Dorsolateral prefrontal cortex (tissue), 120 donors: ENCODE measurements at regions of chr3 and their contacts with region 1.

Region 1: GRCh38 chr3:70531063-70531657 is 218.7 kb upstream of the MDFIC2 start:
- DNase-seq: no peak
- H3K4me3 ChIP-seq: no peak overlapping the region
- H3K27ac ChIP-seq: no peak overlapping the region
- H3K27me3 ChIP-seq: peaks cover 0 to 3% (median 0%) of the 10 kb centered on the region in 45 donors
- CTCF ChIP-seq: peak; percentile 46 to 80 (median 67)

Region 2: DNA sequence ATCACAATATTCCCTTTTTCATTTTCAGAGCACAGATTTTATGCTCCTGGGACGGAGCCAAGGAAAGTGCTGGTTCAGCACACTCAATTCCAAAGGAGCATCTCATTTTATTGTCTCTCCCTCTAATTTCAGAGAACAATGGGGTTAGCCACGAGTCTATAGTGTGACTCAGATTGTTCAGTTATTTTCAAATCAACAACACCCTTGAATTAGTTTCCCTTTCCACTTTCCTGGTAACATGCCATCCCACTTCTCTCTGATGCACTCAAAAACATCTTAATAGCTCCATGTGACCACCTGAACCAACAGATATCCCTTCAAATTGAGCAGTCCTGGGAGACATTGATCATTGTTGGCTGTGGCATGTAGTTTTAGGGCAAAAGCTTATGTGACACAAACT is 171.0 kb after region 1 on chr3:
- intact Hi-C with region 1: no loop called
- DNase-seq: no peak
- H3K4me3 ChIP-seq: no peak overlapping the region
- H3K27ac ChIP-seq: no peak overlapping the region
- H3K27me3 ChIP-seq: peaks cover 0 to 3% (median 0%) of the 10 kb centered on the region in 45 donors
- CTCF ChIP-seq: no peak

Region 3: DNA sequence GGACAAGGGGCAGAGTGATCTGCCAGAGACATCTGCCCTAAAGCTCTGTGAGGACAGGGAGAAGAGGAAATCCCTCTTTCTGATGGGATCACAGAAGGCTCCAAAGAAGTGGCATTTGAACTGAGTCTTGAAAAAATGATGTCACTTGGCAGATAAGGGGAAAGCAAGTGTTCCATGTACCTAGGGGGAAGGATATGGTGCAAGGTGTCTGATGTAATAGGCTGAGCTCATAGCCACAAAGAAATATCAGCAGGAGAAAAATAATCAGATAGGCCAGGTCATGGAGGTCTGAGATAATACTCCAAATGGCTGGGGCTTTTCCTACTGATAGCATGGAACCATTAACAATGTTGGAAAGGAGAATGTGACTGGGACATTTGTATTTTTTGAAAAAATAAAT is 249.6 kb after region 1 on chr3:
- intact Hi-C with region 1: no loop called
- DNase-seq: no peak
- H3K4me3 ChIP-seq: no peak overlapping the region
- H3K27ac ChIP-seq: no peak overlapping the region
- H3K27me3 ChIP-seq: no peaks in the 10 kb centered on the region
- CTCF ChIP-seq: no peak

Region 4: GRCh38 chr3:70930066-70930465 is 398.9 kb after region 1 on chr3:
- intact Hi-C with region 1: no loop called
- DNase-seq: peak in 2 of 10 donors; percentile 25 to 56
- H3K4me3 ChIP-seq: no peak overlapping the region
- H3K27ac ChIP-seq: no peak overlapping the region
- H3K27me3 ChIP-seq: no peaks in the 10 kb centered on the region
- CTCF ChIP-seq: no peak

Region 5: GRCh38 chr3:71641674-71642073 is 1110.5 kb after region 1 on chr3:
- intact Hi-C with region 1: loop called in 1 of 2 experiments (anchors 10 kb)
- DNase-seq: no peak
- H3K4me3 ChIP-seq: no peak overlapping the region
- H3K27ac ChIP-seq: no peak overlapping the region
- H3K27me3 ChIP-seq: no peaks in the 10 kb centered on the region
- CTCF ChIP-seq: no peak